ENCODE measurements at regions of chr20 and their contacts with region 1.

Region 1: DNA sequence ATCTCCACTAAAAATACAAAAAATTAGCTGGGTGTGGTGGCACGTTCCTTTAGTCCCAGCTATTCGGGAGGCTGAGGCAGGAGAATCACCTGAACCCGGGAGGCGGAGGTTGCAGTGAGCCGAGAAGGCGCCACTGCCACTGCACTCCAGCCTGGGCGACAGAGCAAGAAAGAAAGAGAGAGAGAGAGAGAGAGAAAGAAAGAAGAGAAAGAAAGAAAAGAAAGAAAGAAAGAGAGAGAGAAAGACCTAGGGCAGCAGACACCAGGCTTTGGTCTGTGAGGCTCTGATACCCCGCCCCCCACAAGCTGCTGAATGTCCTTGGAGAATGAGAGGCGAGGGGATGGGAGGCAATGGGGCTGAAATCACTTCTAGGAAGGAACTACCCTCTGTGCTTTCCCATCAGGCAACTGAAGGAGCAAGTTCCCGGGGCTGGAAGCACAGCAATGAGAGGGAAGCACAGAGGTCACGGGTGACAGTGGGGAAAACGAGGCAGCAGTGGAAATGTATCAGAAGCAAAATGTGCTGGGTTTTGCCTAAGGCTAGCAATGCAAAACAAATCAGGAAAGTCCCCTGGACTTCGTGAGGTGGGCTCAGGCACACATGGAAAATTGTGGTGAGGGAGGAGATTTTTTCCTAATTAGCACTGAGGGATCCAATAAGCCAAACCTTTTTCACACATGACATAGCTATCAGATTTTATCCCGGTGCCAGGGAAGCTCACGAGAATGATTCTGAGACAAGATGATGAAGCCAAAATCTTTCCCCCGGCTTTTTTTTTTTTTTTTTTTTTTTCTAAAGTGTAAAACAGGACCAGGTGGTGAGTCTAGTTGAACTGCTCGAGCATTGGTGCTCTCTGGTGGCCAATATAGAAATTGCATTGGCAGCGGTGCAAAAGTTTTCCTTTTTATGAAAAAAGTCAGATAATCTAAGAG is 16.9 kb upstream of the ARFGEF2 start:
- DNase-seq: peak in 1 of 2 experiments; percentile 83
- H3K4me3 ChIP-seq: peak overlapping the region in 2 of 4 experiments; percentile 29 to 49; a peak in 5 of 8 replicates
- H3K27ac ChIP-seq: no peak overlapping the region
- H3K4me1 ChIP-seq: peaks cover 0 to 4% (median 3%) of the 10 kb centered on the region in 4 experiments; a peak in 3 of 7 replicates
- H3K27me3 ChIP-seq: no peaks in the 10 kb centered on the region; a peak in 1 of 7 replicates
- CTCF ChIP-seq: peak in 2 of 3 experiments; percentile 70 to 77; a peak in 3 of 4 replicates
- EP300 ChIP-seq: no peak
- POLR2A ChIP-seq: no peak
- RAD21 ChIP-seq: peak; percentile 87 to 92

Region 2: DNA sequence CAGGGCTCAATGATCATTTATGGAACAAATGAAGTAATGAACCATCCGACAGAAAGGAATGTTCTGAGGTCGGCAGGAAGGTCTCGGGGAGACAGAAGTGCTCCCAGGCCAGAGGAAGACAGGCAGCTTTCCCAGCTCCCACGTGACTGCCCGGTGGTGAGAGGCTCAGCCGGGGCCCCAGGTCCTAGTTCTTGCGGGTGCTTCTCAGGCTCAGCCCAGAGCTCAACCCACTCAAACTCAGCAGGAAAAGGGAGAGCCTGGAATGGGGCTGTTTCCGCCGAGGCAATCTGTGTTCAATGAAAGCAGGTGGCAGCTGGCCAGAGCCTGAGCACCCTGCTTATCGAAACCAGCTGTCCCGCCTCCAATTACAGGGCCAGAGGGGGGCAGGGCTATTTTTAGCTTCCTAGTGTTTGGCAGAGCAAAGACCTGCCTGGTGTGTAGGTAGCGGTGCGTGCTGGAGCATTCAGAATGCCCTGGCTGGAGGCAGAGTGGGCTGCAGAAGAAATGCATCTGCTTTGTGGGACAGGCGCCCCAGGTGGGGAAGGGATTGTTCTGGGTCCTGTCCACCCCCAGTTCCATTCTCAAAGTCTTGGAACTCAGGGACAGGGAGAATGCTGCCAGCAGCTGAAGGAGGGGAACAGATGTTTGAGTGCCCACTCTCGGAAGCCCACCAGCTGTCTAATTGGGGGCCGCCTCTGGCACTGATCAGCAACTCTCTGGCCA is 221.9 kb before region 1 on chr20:
- CTCF ChIA-PET with region 1: interaction called, 12 read pairs
- POLR2A ChIA-PET with region 1: no interaction called
- DNase-seq: peak in 1 of 2 experiments; percentile 64
- H3K4me3 ChIP-seq: peak overlapping the region in 3 of 4 experiments; percentile 7 to 18 (median 12); a peak in 3 of 8 replicates
- H3K27ac ChIP-seq: peak overlapping the region; percentile 75
- H3K4me1 ChIP-seq: peaks cover 10 to 31% (median 16%) of the 10 kb centered on the region in 4 experiments
- H3K27me3 ChIP-seq: no peaks in the 10 kb centered on the region
- CTCF ChIP-seq: no peak
- EP300 ChIP-seq: peak in 1 of 2 experiments; percentile 85; a peak in 1 of 3 replicates
- POLR2A ChIP-seq: peak in 1 of 2 experiments; percentile 38; a peak in 1 of 3 replicates
- RAD21 ChIP-seq: peak in 1 of 2 experiments; percentile 2; a peak in 2 of 4 replicates

Region 3: DNA sequence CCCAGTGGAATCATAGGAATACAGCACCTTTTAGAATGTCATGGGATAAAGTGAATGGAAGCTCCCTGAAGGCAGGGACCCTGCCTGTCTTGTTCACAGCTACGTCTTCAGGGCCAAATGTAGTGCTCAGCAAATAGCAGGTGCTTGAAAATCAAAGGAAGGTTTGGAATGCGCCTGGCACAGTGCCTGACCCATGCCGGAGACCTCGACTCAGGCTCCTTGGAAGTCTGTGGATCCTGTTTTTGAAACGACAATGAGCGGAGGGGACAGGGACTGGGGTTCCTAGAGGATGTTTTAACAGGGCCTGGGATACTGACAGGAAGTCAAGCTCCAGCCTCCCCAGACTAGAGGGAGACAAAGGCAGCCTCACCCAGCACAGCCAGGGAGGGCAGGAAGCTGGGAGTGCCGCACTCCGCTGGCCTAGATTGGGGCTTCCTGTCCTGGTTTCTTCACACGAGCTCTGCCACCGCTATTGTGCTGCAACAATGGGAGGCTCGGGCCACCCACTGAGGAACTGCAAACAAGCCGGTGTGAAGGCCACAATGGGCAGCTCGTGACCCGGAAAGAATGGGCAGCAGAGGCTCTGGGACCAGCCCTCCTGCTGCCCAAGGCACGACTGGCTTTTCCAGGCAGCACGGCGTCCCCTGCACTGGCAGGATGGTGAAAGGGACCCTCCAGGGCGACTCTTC is 153.5 kb before region 1 on chr20:
- CTCF ChIA-PET with region 1: interaction called, 11 read pairs
- POLR2A ChIA-PET with region 1: no interaction called
- DNase-seq: peak; percentile 78 to 80
- H3K4me3 ChIP-seq: no peak overlapping the region; a peak in 1 of 8 replicates
- H3K27ac ChIP-seq: peak overlapping the region; percentile 51; the same call in 1 of the 2 replicates
- H3K4me1 ChIP-seq: peaks cover 19 to 50% (median 29%) of the 10 kb centered on the region in 4 experiments
- H3K27me3 ChIP-seq: peaks cover 0 to 3% (median 1%) of the 10 kb centered on the region in 4 experiments; a peak in 3 of 7 replicates
- CTCF ChIP-seq: no peak
- EP300 ChIP-seq: peak in 1 of 2 experiments; percentile 73; a peak in 1 of 3 replicates
- POLR2A ChIP-seq: 0 out of 3 replicates have a peak, but pooled peaks of 1 of the 2 experiments have one; percentile 37
- RAD21 ChIP-seq: no peak; a peak in 1 of 4 replicates

Region 4: DNA sequence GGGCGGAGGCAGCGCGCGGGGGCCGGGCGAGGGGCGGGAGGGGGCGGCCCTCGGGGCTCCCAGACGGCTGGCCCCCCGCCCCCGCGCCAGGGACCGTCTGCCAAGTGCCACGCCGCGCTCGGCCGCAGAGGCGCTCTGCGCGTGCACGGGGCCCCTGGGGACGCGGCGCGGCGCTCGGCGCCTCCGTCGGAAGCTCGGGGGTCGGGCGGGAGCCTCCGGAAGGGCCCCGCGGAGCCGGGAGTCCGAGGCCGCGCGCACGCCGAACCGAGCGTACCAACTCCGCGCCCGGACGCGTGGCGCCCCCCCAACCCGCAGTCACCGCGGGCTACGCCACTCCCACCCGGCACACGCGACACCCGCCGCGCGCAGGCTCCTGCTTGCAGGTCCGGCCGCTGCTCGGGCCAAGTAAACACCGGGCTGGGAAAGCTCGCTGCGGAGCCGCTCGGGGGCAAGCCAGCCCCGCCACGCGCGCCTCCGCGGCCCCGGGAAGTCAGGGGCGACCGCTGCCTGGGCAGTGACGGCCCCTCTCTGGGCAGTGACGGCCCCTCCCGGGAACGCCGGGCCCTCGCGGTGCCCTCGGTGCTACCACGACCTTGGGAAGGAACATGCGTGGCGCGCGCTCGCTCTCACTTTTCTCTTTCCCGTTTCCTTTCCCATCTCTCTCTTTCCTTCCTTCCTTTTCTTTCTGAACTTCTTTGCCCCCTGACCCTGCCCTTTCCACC is 76.4 kb before region 1 on chr20:
- CTCF ChIA-PET with region 1: interaction called, 12 read pairs
- POLR2A ChIA-PET with region 1: interaction called, 3 read pairs
- DNase-seq: peak; percentile 34 to 91
- H3K4me3 ChIP-seq: peak overlapping the region; percentile 47 to 80 (median 54)
- H3K27ac ChIP-seq: no peak overlapping the region
- H3K4me1 ChIP-seq: peaks cover 0 to 9% (median 3%) of the 10 kb centered on the region in 4 experiments; a peak in 5 of 7 replicates
- H3K27me3 ChIP-seq: peaks cover 0 to 45% (median 26%) of the 10 kb centered on the region in 4 experiments; a peak in 6 of 7 replicates
- CTCF ChIP-seq: no peak
- EP300 ChIP-seq: no peak
- POLR2A ChIP-seq: no peak
- RAD21 ChIP-seq: peak in 1 of 2 experiments; percentile 15; a peak in 1 of 4 replicates

Region 5: GRCh38 chr20:48930878-48931277 is 26.2 kb after region 1 on chr20:
- CTCF ChIA-PET with region 1: no interaction called
- POLR2A ChIA-PET with region 1: no interaction called
- DNase-seq: no peak
- H3K4me3 ChIP-seq: no peak overlapping the region
- H3K27ac ChIP-seq: no peak overlapping the region
- H3K4me1 ChIP-seq: no peaks in the 10 kb centered on the region; a peak in 1 of 7 replicates
- H3K27me3 ChIP-seq: no peaks in the 10 kb centered on the region
- CTCF ChIP-seq: no peak
- EP300 ChIP-seq: no peak
- POLR2A ChIP-seq: no peak
- RAD21 ChIP-seq: no peak